RWPE1 (cell line): ENCODE measurements at regions of chr16 and their contacts with region 1.

Region 1: DNA sequence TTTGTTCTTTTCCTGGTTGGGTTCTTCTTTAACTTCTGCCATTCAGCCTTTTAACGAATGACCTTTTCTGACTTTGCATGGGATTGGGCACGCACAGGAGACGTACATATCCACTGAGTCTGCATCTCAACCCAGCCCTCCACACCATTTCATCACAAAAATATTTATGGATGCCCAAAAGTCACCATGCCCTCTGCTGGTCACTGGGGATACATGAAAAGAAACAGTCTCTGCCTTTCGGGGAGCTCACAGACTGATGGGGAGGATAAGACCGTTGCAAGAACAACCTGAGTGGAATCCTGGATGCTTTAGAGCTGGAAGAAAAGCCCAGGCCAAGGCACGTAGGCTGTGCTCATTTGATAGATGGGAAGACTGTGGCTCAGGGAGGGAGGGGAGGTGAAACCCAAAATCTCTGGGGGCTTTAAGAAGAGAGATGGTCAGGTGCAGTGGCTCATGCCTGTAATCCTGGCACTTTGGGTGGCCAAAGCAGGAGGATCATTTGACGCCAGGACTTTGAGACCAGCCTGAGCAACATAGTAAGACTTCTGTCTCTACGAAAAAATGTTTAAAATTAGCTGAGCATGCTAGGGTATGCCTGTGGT is 7.9 kb upstream of the MT2A start:
- DNase-seq: peak; percentile 62
- H3K27ac ChIP-seq: no peak overlapping the region
- CTCF ChIP-seq: peak; percentile 82

Region 2: DNA sequence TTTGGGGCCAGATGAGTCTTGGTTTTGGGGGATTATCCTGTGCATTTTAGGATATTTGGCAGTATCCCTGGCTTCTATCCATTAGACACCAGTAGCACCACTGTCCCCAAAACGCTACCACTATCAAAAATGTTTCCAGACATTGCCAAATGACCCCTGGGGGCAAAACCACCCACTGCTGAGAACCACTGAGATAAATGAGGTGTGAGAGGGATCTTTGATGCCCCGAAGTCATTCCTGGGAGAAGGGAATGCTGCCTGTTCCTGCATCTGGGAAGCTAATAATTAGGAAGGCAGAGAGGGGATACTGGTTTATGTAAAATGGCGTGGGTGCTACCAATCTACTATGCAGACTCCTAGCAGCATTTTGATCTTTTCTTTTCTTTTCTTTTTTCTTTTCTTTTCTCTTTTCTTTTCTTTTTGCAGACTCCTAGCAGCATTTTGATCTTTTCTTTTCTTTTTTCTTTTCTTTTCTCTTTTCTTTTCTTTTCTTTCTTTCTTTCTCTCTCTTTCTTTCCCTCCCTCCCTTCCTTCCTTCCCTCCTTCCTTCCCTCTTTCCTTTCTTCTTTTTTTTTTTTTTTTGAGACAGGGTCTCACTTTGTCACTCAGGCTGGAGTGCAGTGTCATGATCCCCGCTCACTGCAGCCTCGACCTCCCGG is 20.0 kb before region 1 on chr16:
- CTCF ChIA-PET with region 1: interaction called, 14 read pairs
- POLR2A ChIA-PET with region 1: no interaction called
- DNase-seq: no peak
- H3K27ac ChIP-seq: no peak overlapping the region
- CTCF ChIP-seq: no peak

Region 3: DNA sequence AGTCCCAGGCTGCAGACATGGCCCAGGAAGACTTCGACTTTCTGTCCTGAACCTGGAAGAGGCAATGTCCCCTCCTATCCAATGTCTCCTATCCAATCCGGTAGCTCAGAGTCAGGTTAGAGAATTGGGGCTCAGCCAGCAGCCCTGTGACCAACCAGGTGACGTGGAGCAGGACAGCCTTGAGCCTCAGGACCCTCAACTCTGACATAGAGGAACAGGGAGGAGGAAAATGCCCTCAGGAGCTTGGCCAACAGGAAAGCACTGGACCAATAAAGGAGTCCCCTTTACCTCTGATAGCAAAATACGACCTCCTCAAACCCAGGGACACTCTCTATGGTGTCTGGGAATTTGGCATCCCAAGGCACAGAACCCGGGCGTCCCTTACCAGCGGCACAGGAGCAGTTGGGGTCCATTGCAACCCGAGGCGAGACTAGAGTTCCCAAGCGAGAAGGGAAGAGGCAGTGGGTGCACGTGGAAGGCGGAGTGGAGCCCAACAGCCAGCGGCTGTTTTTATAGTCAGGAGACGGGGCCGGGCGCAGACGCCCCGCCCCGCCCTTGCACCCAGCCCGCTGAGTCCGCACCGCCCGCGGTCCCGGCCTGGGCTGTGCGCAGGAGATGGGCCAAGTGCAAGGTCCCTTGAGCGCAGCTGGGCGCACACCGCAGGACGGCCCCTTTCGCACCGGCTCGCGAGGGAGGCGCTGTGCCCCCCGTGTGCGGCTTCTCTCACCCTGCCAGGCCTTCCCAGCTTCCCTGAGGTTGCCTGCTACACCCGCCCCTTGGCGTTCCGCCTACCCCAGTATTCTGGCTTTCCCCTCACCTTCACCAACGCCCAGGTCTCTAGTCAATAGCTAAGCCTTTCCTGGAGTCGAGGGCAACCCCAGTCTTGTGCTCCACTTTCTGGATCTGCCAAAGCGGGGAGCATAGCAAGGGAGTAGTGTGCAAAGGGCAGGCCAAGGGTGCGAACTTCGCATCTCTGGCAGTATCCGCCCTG is 67.4 kb after region 1 on chr16 and contains the start of gene MT1G:
- CTCF ChIA-PET with region 1: no interaction called
- POLR2A ChIA-PET with region 1: no interaction called
- DNase-seq: no peak
- H3K27ac ChIP-seq: no peak within 1 kb of the TSS
- CTCF ChIP-seq: no peak

Region 4: GRCh38 chr16:56742030-56742984 is 141.8 kb after region 1 on chr16:
- CTCF ChIA-PET with region 1: no interaction called
- POLR2A ChIA-PET with region 1: no interaction called
- DNase-seq: peak; percentile 68
- H3K27ac ChIP-seq: no peak overlapping the region
- CTCF ChIP-seq: no peak

Region 5: GRCh38 chr16:56789360-56789759 is 188.9 kb after region 1 on chr16:
- CTCF ChIA-PET with region 1: no interaction called
- POLR2A ChIA-PET with region 1: no interaction called
- DNase-seq: peak; percentile 38
- H3K27ac ChIP-seq: no peak overlapping the region
- CTCF ChIP-seq: peak; percentile 38